Body of pancreas (tissue), 4 donors: ENCODE measurements at regions of chr7 and their contacts with region 1.

Region 1: GRCh38 chr7:111741811-111742240 is 179.5 kb upstream of the IMMP2L start:
- DNase-seq: peak; percentile 49 to 77 (median 72)
- ATAC-seq: peak; percentile 74
- H3K4me3 ChIP-seq: no peak overlapping the region
- H3K27ac ChIP-seq: no peak overlapping the region
- H3K4me1 ChIP-seq: no peaks in the 10 kb centered on the region
- H3K27me3 ChIP-seq: no peaks in the 10 kb centered on the region
- CTCF ChIP-seq: peak; percentile 34 to 82 (median 69)
- POLR2A ChIP-seq: no peak

Region 2: GRCh38 chr7:112400141-112400540 is 658.3 kb after region 1 on chr7:
- intact Hi-C with region 1: loop called (anchors 10 kb)
- DNase-seq: no peak
- ATAC-seq: no peak
- H3K4me3 ChIP-seq: no peak overlapping the region
- H3K27ac ChIP-seq: no peak overlapping the region
- H3K4me1 ChIP-seq: no peaks in the 10 kb centered on the region
- H3K27me3 ChIP-seq: no peaks in the 10 kb centered on the region
- CTCF ChIP-seq: no peak
- POLR2A ChIP-seq: no peak

Region 3: GRCh38 chr7:112495810-112496462 is 754.1 kb after region 1 on chr7:
- intact Hi-C with region 1: loop called (anchors 5 kb)
- DNase-seq: peak; percentile 58 to 78 (median 65)
- ATAC-seq: peak; percentile 78
- H3K4me3 ChIP-seq: no peak overlapping the region
- H3K27ac ChIP-seq: no peak overlapping the region
- H3K4me1 ChIP-seq: no peaks in the 10 kb centered on the region
- H3K27me3 ChIP-seq: no peaks in the 10 kb centered on the region
- CTCF ChIP-seq: peak; percentile 19 to 87 (median 79)
- POLR2A ChIP-seq: no peak